ENCODE measurements at regions of chr5 and their contacts with region 1.

Region 1: DNA sequence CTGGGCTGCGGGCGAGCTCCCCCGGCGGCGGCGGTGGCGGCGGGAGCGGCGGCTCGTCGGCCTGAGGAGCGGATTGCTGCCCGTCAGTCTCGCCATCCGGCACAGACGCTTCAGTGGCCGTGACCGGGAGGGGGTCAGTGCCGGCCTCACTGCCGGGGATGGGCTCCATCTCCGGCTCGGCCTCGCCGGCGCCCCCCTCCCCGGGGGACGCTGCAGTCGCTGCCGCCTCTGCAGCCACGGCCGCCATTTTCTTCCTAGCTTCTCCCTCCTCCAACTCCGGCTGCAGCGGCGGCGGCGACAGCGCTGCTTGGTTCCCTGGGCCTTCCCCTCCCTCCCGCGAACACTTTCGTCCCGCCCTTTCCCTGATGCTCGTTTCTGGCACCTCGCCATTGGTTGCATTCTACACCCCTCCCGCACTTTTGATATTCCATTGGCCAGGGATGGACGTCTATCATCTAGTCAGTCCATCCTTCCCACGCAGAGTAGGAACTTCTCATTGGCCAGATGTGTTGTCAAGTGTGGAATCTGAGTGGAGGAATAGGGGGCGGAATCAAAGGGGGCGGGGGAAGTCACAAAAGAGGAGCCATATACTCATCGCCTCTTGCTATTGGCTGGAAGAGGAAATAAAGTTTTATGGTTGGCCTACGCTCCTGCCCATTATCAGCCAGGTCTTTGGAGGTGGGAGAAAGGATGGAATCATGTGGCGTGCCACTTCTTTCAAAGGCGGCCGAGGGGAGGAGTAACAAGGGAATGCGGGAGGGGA is at the start of gene PWWP2A:
- DNase-seq: peak; percentile 100
- H3K4me3 Mint-ChIP-seq: peak within 1 kb of the TSS; percentile 83
- H3K27ac Mint-ChIP-seq: peak within 1 kb of the TSS; percentile 88
- H3K4me1 Mint-ChIP-seq: peaks cover 15% of the 10 kb centered on the region
- H3K27me3 Mint-ChIP-seq: peaks cover 15% of the 10 kb centered on the region
- CTCF ChIP-seq: no peak
- total RNA-seq, gene PWWP2A: 20.6 and 21.3 TPM in 2 replicates

Region 2: GRCh38 chr5:159992566-159992965 is 126.8 kb before region 1 on chr5:
- CTCF ChIA-PET with region 1: no interaction called
- POLR2A ChIA-PET with region 1: no interaction called
- intact Hi-C with region 1: no loop called
- DNase-seq: no peak
- H3K4me3 Mint-ChIP-seq: no peak overlapping the region
- H3K27ac Mint-ChIP-seq: no peak overlapping the region
- H3K4me1 Mint-ChIP-seq: no peaks in the 10 kb centered on the region
- H3K27me3 Mint-ChIP-seq: no peaks in the 10 kb centered on the region
- CTCF ChIP-seq: no peak

Region 3: DNA sequence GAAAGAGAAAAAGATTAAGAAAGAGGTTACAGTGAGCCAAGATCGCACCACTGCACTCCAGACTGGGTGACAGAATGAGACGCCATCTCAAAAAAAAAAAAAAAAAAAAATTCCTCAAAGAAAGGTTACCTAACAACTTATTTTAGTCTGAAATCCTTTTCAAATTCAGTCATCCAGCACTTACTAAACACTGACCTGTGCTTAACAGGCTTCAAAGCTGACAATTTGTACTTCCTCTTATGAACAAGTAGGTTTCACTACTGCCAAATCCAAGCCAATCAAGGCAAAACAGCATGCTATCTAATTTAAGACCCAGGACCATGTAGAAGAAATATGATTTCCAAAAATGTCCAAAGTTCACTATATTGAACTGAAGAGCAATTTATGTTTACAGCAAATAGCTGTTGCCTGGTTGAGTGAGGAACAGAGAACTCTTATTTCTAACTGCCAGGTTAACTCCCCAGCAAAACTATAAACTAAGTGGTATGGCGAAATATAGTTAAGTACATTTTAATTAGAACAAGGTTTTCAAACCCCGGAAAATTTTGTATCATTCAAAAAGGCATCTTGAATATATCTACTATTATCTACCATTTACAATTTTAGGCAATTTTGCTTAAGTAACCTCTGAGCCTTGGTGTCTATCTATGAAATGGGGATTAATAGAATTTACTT is 13.5 kb before region 1 on chr5:
- CTCF ChIA-PET with region 1: interaction called, 3 read pairs
- POLR2A ChIA-PET with region 1: interaction called, 12 read pairs
- intact Hi-C with region 1: no loop called
- DNase-seq: no peak
- H3K4me3 Mint-ChIP-seq: no peak overlapping the region
- H3K27ac Mint-ChIP-seq: peak overlapping the region; percentile 68
- H3K4me1 Mint-ChIP-seq: peaks cover 10% of the 10 kb centered on the region
- H3K27me3 Mint-ChIP-seq: no peaks in the 10 kb centered on the region
- CTCF ChIP-seq: no peak

Region 4: GRCh38 chr5:160165137-160166068 is 46.1 kb after region 1 on chr5:
- CTCF ChIA-PET with region 1: interaction called, 4 read pairs
- POLR2A ChIA-PET with region 1: interaction called, 14 read pairs
- intact Hi-C with region 1: loop called (anchors 1 kb)
- DNase-seq: peak; percentile 100
- H3K4me3 Mint-ChIP-seq: peak overlapping the region; percentile 54
- H3K27ac Mint-ChIP-seq: peak overlapping the region; percentile 87
- H3K4me1 Mint-ChIP-seq: peaks cover 33% of the 10 kb centered on the region
- H3K27me3 Mint-ChIP-seq: no peaks in the 10 kb centered on the region
- CTCF ChIP-seq: no peak